GM12878 (cell line): ENCODE measurements at regions of chr4 and their contacts with region 1.

Region 1: DNA sequence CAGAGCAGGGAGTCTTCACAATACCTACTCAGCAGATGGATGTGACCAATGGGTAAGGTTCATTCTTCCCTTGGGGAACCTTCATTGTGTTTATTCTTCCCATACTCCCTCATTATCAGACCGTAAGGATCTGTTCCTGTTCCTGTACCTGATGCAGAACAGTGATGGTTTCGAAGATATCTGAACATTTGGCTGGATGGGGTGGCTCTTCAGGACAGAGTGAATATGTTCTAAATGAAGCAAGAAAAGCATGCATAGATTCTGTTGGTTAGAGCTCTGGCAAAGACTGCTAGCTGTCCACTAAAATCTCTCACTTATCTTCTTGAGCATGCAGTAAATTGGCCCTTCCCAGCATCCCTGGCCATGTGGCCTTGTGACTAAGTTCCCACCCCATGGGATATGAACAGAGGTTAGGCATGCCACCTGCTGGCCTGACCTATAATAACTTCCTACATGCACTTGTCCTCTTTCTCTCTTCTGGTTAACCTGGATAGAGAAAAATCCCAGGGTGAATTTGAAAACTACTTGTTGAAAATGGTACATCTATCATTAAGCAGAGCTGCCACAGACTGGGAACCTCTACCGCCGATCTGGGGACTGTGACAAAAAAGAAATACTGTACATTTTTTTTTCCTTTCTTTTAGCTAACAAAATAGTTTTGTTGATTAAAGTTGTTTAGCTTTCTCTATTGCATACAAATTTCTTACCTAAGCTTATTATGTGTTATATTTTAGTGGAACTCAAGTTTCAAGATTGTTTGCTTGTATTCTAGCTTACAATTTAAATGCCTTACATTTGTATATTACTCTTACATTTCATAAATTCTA is 60.0 kb upstream of the BANK1 start:
- DNase-seq: peak; percentile 8
- ATAC-seq: peak; percentile 95
- H3K4me3 ChIP-seq: no peak overlapping the region
- H3K27ac ChIP-seq: no peak overlapping the region
- H3K4me1 ChIP-seq: no peaks in the 10 kb centered on the region
- H3K27me3 ChIP-seq: no peaks in the 10 kb centered on the region
- CTCF ChIP-seq: peak; percentile 55 to 72 (median 62); a peak in 5 of 6 replicates
- EP300 ChIP-seq: no peak
- POLR2A ChIP-seq: no peak
- RAD21 ChIP-seq: peak; percentile 84

Region 2: GRCh38 chr4:101135371-101136010 is 595.0 kb before region 1 on chr4:
- CTCF ChIA-PET with region 1: no interaction called
- POLR2A ChIA-PET with region 1: interaction called, 10 read pairs
- RAD21 ChIA-PET with region 1: no interaction called
- SMC1A ChIA-PET with region 1: no interaction called
- in situ Hi-C with region 1: no loop called
- intact Hi-C with region 1: no loop called
- DNase-seq: no peak
- ATAC-seq: peak; percentile 80
- H3K4me3 ChIP-seq: 0 out of 2 replicates have a peak overlapping the region, but pooled peaks have one; percentile 39
- H3K27ac ChIP-seq: no peak overlapping the region; the same call in 1 of the 2 replicates
- H3K4me1 ChIP-seq: peaks cover 10% of the 10 kb centered on the region; the same call in 1 of the 2 replicates
- H3K27me3 ChIP-seq: no peaks in the 10 kb centered on the region
- CTCF ChIP-seq: no peak
- EP300 ChIP-seq: peak in 1 of 2 experiments; percentile 27; a peak in 1 of 4 replicates
- POLR2A ChIP-seq: no peak
- RAD21 ChIP-seq: no peak

Region 3: DNA sequence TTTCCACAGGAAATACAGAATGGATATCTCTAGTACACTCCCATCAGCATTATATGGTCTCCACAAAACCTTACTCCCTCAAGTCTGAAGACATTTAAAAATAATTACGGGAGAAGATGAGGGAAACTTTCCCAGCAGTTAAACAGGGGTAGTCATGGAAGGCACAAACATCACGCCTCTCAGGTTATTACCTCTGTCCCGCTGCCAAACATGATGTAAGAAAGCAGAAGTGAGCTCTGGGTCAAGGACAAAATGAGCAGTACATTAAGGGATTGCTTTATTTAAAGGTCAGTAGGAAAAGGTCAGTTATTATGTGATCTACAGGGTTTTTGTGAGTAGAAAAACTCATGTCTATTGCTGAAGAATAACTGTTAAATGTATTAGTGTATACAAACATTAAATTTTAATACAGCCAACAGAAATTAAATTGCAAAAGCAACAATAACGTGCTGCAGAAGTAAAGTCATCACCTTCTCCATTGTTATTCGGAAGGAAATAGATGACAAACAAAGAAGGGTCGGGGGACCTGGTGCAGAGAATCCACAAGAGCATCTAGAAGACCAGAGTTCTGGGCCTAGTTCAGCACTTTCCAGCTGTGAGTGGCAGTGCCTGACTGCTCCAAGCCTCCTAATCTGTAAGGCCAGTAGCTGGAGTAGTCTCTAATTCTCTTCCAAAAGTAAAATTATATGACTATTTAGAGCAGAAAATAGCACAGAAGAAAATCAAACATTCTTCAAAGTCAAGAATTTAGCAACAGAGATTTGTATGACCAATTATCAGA is 554.4 kb before region 1 on chr4:
- CTCF ChIA-PET with region 1: interaction called, 117 read pairs
- POLR2A ChIA-PET with region 1: no interaction called
- RAD21 ChIA-PET with region 1: interaction called, 52 read pairs
- SMC1A ChIA-PET with region 1: interaction called, 22 read pairs
- in situ Hi-C with region 1: no loop called
- intact Hi-C with region 1: no loop called
- DNase-seq: no peak
- ATAC-seq: 0 out of 3 replicates have a peak, but pooled peaks have one; percentile 21
- H3K4me3 ChIP-seq: no peak overlapping the region
- H3K27ac ChIP-seq: no peak overlapping the region
- H3K4me1 ChIP-seq: no peaks in the 10 kb centered on the region
- H3K27me3 ChIP-seq: no peaks in the 10 kb centered on the region
- CTCF ChIP-seq: no peak
- EP300 ChIP-seq: no peak
- POLR2A ChIP-seq: no peak
- RAD21 ChIP-seq: no peak

Region 4: DNA sequence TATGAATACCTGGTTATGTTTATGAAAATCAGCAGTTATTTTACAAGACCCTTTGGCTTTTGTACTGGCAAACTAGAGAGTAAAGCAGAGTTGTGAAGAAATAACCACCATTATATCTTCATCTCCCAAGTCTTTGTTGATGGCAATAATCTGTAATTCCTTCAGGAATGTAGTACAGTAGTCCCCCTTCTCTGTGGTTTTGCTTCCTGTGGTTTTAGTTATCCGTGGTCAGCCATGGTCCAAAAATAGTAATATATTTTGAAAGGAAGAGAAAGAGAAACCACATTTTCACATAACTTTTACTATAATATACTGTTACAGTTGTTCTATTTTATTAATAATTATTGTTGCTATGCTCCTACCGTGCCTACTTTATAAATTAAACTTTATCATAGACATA is 87.9 kb after region 1 on chr4:
- CTCF ChIA-PET with region 1: no interaction called
- POLR2A ChIA-PET with region 1: no interaction called
- RAD21 ChIA-PET with region 1: no interaction called
- SMC1A ChIA-PET with region 1: no interaction called
- in situ Hi-C with region 1: no loop called
- intact Hi-C with region 1: no loop called
- DNase-seq: no peak
- ATAC-seq: no peak
- H3K4me3 ChIP-seq: no peak overlapping the region
- H3K27ac ChIP-seq: no peak overlapping the region
- H3K4me1 ChIP-seq: no peaks in the 10 kb centered on the region
- H3K27me3 ChIP-seq: no peaks in the 10 kb centered on the region
- CTCF ChIP-seq: no peak
- EP300 ChIP-seq: no peak
- POLR2A ChIP-seq: no peak
- RAD21 ChIP-seq: no peak

Region 5: GRCh38 chr4:102061133-102061532 is 330.6 kb after region 1 on chr4:
- CTCF ChIA-PET with region 1: no interaction called
- POLR2A ChIA-PET with region 1: no interaction called
- RAD21 ChIA-PET with region 1: no interaction called
- SMC1A ChIA-PET with region 1: no interaction called
- in situ Hi-C with region 1: no loop called
- intact Hi-C with region 1: no loop called
- DNase-seq: no peak
- ATAC-seq: peak; percentile 98
- H3K4me3 ChIP-seq: no peak overlapping the region
- H3K27ac ChIP-seq: no peak overlapping the region
- H3K4me1 ChIP-seq: no peaks in the 10 kb centered on the region
- H3K27me3 ChIP-seq: no peaks in the 10 kb centered on the region
- CTCF ChIP-seq: no peak
- EP300 ChIP-seq: no peak
- POLR2A ChIP-seq: no peak
- RAD21 ChIP-seq: no peak